ENCODE measurements at regions of chr4 and their contacts with region 1.

Region 1: DNA sequence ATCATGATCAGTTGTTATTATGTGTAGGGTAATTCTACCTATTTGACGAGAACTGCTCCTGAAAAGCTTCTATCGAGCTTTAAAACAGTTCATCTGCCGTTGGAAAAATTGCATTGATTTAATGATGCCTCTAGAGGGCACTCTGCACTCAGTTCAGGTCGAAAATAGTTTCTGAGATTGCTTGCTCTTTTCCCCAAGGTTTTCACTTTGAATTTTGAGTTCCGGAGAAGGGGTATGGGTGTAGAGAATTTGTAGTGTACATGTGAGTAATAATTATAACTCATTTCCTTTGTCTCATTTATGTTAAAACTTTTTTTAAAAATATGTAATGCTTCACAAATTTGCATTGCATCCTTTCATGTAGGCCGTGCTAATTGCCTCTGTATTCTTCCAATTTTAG is 28.4 kb upstream of the TNIP3 start:
- DNase-seq: no peak
- ATAC-seq: peak; percentile 27

Region 2: GRCh38 chr4:120819805-120820437 is 372.6 kb before region 1 on chr4:
- intact Hi-C with region 1: no loop called
- DNase-seq: no peak
- ATAC-seq: peak; percentile 53

Region 3: GRCh38 chr4:121252224-121252806 is 59.8 kb after region 1 on chr4:
- intact Hi-C with region 1: loop called (anchors 2 kb)
- DNase-seq: peak; percentile 57
- ATAC-seq: peak; percentile 78

Measured in Right ventricle myocardium superior (tissue), 1 donor.